GM12878 (cell line): ENCODE measurements at regions of chr13 and their contacts with region 1.

Region 1: DNA sequence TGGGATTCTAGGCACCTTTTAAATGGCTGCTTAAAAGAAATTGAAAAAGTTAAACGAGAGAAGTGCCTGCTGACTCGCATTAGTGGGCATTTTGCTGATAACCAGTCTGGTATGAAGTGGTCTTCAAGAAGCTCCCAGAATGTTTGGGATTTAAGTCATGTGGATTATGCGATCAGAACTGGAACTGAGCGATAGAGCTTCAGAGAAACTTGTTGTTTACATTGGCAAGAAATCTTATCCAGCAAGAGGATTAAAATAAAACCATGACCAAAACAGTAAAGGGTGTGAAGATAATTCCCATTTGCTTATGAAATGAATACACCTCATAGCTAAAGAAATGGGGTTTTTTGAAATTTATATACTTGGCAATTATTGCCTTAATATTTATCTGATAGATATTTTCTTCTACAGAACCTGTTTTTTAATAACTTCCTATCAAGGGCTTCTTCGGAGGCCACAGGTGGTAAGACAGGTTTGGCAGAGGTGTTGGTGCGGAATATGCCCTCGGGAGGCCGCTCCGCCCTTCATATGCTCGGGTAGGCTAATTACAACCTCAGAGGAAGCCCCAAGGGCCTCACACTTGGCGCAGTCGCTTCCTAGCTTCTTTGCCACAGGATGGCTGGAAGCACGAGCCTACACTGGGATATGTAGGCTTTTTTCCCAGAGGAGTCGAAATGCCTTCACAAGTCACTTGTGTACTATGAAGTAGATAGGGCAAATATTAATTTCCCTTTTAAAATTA is 68.6 kb downstream of the LMO7 start:
- DNase-seq: no peak
- ATAC-seq: no peak
- H3K4me3 ChIP-seq: no peak overlapping the region
- H3K27ac ChIP-seq: no peak overlapping the region
- H3K4me1 ChIP-seq: no peaks in the 10 kb centered on the region
- H3K27me3 ChIP-seq: no peaks in the 10 kb centered on the region
- CTCF ChIP-seq: no peak
- EP300 ChIP-seq: no peak
- POLR2A ChIP-seq: no peak
- RAD21 ChIP-seq: no peak

Region 2: DNA sequence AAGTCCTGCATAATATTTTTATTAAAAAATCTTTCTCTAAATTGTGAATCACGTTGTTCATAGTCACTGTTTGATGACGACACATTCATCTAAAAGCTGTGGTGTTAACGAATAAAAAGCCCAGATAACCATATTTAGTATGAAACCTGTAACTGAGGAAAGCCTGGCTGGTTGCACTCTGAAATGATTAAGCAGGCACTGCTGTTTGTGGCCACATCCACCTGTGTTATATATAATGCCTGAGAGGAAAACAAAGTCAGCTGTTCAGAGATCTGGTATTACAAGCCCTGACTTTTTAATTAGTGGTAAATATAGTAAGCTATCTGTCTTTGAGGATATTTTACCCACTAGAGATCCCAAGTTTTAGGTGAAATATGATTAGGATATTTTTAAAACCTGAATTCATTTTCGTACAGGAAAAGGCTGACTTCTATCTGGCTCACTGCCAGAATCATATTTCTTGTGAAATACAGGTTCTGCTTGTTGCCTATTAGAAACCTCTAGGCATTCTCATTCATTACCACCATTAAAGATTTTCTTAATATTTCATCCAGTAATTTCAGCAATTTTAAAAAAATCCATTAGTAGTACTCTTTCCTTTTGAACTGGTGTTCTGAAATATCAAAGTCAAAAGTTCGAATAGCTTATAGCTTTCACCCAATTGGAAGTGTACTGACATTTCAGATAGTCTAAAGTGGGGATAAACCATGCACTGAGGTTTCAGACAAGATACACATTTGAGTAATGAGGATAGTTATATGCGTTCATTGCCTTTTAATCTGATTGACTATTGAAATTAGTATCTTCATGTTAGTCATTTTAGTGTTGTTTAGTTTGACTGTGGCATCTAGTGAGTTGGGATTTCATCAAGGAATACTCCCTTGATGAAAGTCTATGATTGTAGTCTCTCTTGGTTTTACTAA is 11.1 kb after region 1 on chr13:
- CTCF ChIA-PET with region 1: interaction called, 3 read pairs
- POLR2A ChIA-PET with region 1: no interaction called
- RAD21 ChIA-PET with region 1: interaction called, 4 read pairs
- SMC1A ChIA-PET with region 1: interaction called, 11 read pairs
- in situ Hi-C with region 1: no loop called
- intact Hi-C with region 1: no loop called
- DNase-seq: peak; percentile 41
- ATAC-seq: peak; percentile 96
- H3K4me3 ChIP-seq: no peak overlapping the region
- H3K27ac ChIP-seq: peak overlapping the region; percentile 35; the same call in 1 of the 2 replicates
- H3K4me1 ChIP-seq: no peaks in the 10 kb centered on the region
- H3K27me3 ChIP-seq: no peaks in the 10 kb centered on the region
- CTCF ChIP-seq: no peak
- EP300 ChIP-seq: no peak
- POLR2A ChIP-seq: no peak
- RAD21 ChIP-seq: no peak